CD8-positive, alpha-beta T cell (primary cell): ENCODE measurements at regions of chr2 and their contacts with region 1.

Region 1: GRCh38 chr2:27370026-27370815 is at the starts of genes EIF2B4 and SNX17:
- DNase-seq: peak; percentile 98 to 100 (median 99)
- ATAC-seq: peak; percentile 91
- H3K4me3 ChIP-seq: peak within 1 kb of the TSS; percentile 88 to 94
- H3K4me3 Mint-ChIP-seq: peak within 1 kb of the TSS; percentile 96
- H3K27ac ChIP-seq: peak within 1 kb of the TSS; percentile 76 to 88
- H3K27ac Mint-ChIP-seq: peak within 1 kb of the TSS; percentile 97
- H3K4me1 ChIP-seq: peaks cover 35% of the 10 kb centered on the region
- H3K4me1 Mint-ChIP-seq: peaks cover 36% of the 10 kb centered on the region
- H3K27me3 ChIP-seq: no peaks in the 10 kb centered on the region
- H3K27me3 Mint-ChIP-seq: no peaks in the 10 kb centered on the region
- CTCF ChIP-seq: peak; percentile 64
- total RNA-seq, gene EIF2B4: 39.7 to 39.9 TPM
- total RNA-seq, gene SNX17: 64.8 to 66.5 TPM

Region 2: GRCh38 chr2:27123302-27124231 is 246.7 kb before region 1 on chr2 and contains the start of gene ABHD1:
- CTCF ChIA-PET with region 1: no interaction called
- POLR2A ChIA-PET with region 1: no interaction called
- intact Hi-C with region 1: loop called in 1 of 2 experiments (anchors 1 kb)
- DNase-seq: peak; percentile 19 to 82 (median 68)
- ATAC-seq: peak; percentile 83
- H3K4me3 ChIP-seq: peak within 1 kb of the TSS; percentile 41 to 68
- H3K4me3 Mint-ChIP-seq: peak within 1 kb of the TSS; percentile 92
- H3K27ac ChIP-seq: peak within 1 kb of the TSS in 1 of 2 experiments; percentile 62
- H3K27ac Mint-ChIP-seq: peak within 1 kb of the TSS; percentile 81
- H3K4me1 ChIP-seq: peaks cover 14% of the 10 kb centered on the region
- H3K4me1 Mint-ChIP-seq: peaks cover 22% of the 10 kb centered on the region
- H3K27me3 ChIP-seq: peaks cover under 1 to 4% of the 10 kb centered on the region in 2 experiments
- H3K27me3 Mint-ChIP-seq: peaks cover 13% of the 10 kb centered on the region
- CTCF ChIP-seq: no peak
- total RNA-seq, gene ABHD1: 0.67 to 1.0 TPM

Region 3: DNA sequence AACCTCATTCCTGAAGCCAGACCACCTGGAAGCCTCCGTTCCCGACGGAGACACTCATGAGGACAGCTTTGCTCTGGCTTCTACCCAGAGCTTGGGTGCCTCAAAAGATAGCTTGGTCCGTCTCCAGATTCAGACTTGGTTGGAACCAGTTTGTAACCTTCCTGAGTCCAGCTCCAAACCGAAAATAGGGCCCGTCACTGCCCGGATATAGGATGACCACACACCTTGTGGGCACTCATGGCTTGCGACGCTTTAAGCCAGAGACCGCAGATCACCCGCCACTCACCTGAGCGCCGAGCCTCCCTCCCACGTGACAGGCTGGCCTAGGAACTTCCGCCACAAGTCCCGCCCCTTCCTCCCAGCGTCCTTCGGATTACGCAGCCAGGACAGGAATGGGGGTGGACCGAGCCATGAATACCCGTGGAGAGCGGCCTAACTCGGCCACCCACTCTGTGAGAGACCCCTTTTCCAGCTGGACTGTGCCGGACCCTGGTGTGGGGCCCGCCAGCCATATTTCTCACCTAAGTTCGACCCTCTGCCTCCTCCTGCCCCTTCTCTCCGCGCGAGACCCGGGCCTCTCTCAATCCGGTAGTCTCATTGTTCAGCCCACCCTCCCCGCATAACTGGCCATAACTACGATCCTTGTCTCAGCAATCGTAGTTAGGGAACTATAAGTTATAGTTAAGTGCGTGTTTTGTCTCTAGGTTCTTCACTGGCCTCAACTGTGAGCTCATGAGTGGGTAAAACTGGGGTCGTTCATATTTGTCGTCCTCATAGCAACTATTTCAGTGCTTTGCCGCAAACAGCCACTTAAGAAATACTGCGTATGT is 47.2 kb before region 1 on chr2 and contains the start of gene MPV17:
- CTCF ChIA-PET with region 1: interaction called, 3 read pairs
- POLR2A ChIA-PET with region 1: interaction called, 4 read pairs
- intact Hi-C with region 1: loop called (anchors 1 kb)
- DNase-seq: peak; percentile 65 to 93 (median 87)
- ATAC-seq: peak; percentile 96
- H3K4me3 ChIP-seq: peak within 1 kb of the TSS; percentile 80 to 81
- H3K4me3 Mint-ChIP-seq: peak within 1 kb of the TSS; percentile 99
- H3K27ac ChIP-seq: peak within 1 kb of the TSS; percentile 89 to 94
- H3K27ac Mint-ChIP-seq: peak within 1 kb of the TSS; percentile 99
- H3K4me1 ChIP-seq: peaks cover 9% of the 10 kb centered on the region
- H3K4me1 Mint-ChIP-seq: peaks cover 25% of the 10 kb centered on the region
- H3K27me3 ChIP-seq: no peaks in the 10 kb centered on the region
- H3K27me3 Mint-ChIP-seq: no peaks in the 10 kb centered on the region
- CTCF ChIP-seq: no peak
- total RNA-seq, gene MPV17: 23.6 to 26.0 TPM

Region 4: DNA sequence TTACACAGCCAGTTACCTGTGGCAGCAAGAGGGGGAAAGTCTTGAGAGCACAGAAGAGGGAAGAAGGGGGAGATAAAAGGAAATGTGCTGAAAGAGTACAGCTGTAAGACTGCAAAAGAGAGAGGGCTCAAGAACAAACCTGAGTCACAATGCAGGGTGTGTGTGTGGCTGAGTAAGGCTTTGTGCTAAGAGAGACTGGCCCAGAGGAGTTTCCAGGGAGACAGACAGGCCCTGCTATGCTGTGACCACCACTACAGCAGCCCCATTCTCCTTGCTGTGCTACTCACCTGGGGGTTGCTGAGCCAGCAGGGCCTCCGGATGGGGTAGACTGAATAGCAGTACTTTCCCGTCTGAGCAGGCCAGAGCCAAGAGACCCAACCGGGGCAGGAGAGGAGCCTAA is 34.9 kb before region 1 on chr2:
- CTCF ChIA-PET with region 1: no interaction called
- POLR2A ChIA-PET with region 1: no interaction called
- intact Hi-C with region 1: no loop called
- DNase-seq: no peak
- ATAC-seq: no peak
- H3K4me3 ChIP-seq: no peak overlapping the region
- H3K4me3 Mint-ChIP-seq: no peak overlapping the region
- H3K27ac ChIP-seq: no peak overlapping the region
- H3K27ac Mint-ChIP-seq: no peak overlapping the region
- H3K4me1 ChIP-seq: no peaks in the 10 kb centered on the region
- H3K4me1 Mint-ChIP-seq: no peaks in the 10 kb centered on the region
- H3K27me3 ChIP-seq: no peaks in the 10 kb centered on the region
- H3K27me3 Mint-ChIP-seq: no peaks in the 10 kb centered on the region
- CTCF ChIP-seq: no peak

Region 5: DNA sequence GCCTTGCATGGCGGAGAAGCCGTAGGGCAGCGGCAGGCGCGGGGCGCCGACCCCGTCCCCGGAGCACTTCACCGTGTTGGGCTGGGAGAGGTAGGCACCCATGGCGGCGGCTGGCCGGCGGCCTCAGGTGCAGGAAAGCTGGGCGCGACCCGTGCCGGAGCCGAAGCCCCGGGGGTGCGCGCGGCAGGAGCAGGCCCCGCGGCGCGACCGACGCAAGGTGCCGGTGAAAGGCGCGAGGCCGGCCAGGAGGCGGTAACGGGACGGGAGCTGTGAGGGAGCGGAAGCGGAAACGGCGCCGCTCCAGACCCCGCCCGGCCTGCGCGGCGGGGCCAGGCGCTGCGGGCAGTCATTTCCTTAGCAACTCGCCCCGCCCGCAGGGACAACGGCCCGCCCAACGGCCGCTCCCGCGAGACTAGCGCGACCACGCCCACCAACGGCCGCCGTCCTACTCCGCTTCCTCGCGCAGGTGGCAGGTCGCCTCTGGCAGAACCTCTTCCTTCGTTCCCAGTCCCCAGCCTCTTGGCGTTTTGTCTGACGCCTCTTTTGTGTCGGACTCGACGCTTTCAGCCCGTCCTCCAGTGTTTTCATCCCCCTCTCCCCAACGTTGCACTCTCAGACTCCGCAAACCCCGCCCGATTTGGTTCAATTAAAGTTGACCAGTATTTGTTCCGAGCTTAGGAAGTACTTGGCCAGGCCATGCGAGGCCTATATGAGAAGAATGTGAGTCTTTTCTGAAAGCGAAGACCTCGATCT is 39.3 kb after region 1 on chr2 and contains the start of gene PPM1G:
- CTCF ChIA-PET with region 1: no interaction called
- POLR2A ChIA-PET with region 1: interaction called, 13 read pairs
- intact Hi-C with region 1: loop called (anchors 1 kb)
- DNase-seq: peak; percentile 91 to 98 (median 97)
- ATAC-seq: peak; percentile 96
- H3K4me3 ChIP-seq: peak within 1 kb of the TSS; percentile 51 to 98
- H3K4me3 Mint-ChIP-seq: peak within 1 kb of the TSS; percentile 88
- H3K27ac ChIP-seq: peak within 1 kb of the TSS; percentile 84 to 90
- H3K27ac Mint-ChIP-seq: peak within 1 kb of the TSS; percentile 97
- H3K4me1 ChIP-seq: peaks cover 21% of the 10 kb centered on the region
- H3K4me1 Mint-ChIP-seq: peaks cover 39% of the 10 kb centered on the region
- H3K27me3 ChIP-seq: no peaks in the 10 kb centered on the region
- H3K27me3 Mint-ChIP-seq: no peaks in the 10 kb centered on the region
- CTCF ChIP-seq: no peak
- total RNA-seq, gene PPM1G: 36.4 to 38.5 TPM

Region 6: DNA sequence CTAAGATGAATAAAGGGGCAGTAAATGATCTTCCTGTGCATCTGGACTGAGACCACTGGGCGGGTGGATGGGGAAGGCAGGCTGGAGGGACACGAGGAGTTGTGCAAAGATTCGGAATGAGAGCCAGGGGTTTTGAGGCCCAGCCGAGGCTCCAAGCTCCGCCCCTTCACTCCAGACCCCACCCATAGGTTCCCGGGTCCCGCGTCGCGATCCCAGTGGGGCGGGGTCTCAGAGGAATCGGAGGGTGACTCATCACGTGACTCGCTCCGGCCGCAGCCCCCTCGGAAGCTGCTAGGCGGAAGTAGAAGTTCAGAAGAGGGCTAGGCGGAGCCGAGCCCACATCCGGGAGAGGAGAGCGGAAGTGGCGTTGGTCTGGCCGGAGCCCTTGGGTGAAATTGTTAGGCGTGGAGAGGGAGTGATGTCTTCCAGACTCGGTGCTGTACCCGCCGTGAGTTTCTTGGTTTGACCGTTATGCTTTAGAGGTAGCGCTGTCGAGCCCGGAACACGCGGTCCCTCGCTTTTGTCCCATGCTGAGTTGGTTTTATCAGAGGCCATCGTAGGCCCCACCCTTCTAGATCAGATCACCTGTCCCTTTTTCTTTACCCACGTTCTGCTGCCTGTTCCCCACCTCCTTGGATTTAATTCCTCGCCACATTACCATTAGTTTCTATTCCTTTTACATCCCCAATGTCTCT is 212.6 kb after region 1 on chr2 and contains the start of gene ZNF512:
- CTCF ChIA-PET with region 1: no interaction called
- POLR2A ChIA-PET with region 1: no interaction called
- intact Hi-C with region 1: loop called in 1 of 2 experiments (anchors 10 kb)
- DNase-seq: peak; percentile 54 to 89 (median 75)
- ATAC-seq: peak; percentile 76
- H3K4me3 ChIP-seq: peak within 1 kb of the TSS; percentile 57 to 62
- H3K4me3 Mint-ChIP-seq: peak within 1 kb of the TSS; percentile 98
- H3K27ac ChIP-seq: peak within 1 kb of the TSS; percentile 69 to 80
- H3K27ac Mint-ChIP-seq: peak within 1 kb of the TSS; percentile 98
- H3K4me1 ChIP-seq: peaks cover 41% of the 10 kb centered on the region
- H3K4me1 Mint-ChIP-seq: peaks cover 55% of the 10 kb centered on the region
- H3K27me3 ChIP-seq: peaks cover 0 to 3% of the 10 kb centered on the region in 2 experiments
- H3K27me3 Mint-ChIP-seq: no peaks in the 10 kb centered on the region
- CTCF ChIP-seq: no peak
- total RNA-seq, gene ZNF512: 12.4 TPM

Region 7: DNA sequence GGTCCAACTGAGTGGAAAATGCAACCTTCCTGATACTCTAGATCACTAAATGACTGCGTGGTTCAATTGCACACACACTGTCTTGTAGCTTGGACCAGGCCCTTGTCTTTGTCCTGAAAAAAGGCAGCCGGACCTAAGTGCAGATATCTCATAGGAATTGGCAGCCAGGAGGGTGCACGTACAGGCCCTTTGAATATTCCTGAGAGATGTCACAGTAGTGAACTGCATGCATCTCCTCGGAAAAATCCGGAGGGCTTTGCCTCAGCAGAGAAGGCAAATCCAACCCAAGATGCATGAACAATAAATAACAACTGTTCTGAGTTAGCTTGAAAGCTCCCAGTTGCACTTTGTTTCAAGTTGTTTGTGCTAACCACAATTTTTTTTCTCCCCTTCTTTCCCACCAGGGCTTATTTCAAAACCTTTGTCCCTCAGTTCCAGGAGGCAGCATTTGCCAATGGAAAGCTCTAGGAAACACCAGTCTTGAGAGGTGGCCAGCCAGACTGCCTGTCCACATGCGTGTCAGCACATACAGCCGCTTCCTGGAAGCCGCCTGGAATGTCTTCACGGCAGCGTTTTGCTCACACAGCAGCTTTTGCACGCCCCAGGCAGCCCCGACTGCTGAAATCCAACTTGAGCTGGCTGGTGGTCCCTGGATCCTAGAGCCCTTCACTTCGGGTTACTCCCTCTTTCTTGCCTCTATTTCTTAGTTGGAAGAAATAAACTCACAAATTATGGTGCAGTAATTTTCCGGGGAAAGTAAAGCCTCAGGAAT is 968.0 kb after region 1 on chr2:
- CTCF ChIA-PET with region 1: no interaction called
- POLR2A ChIA-PET with region 1: no interaction called
- intact Hi-C with region 1: no loop called
- DNase-seq: no peak
- ATAC-seq: no peak
- H3K4me3 ChIP-seq: no peak overlapping the region
- H3K4me3 Mint-ChIP-seq: no peak overlapping the region
- H3K27ac ChIP-seq: no peak overlapping the region
- H3K27ac Mint-ChIP-seq: no peak overlapping the region
- H3K4me1 ChIP-seq: no peaks in the 10 kb centered on the region
- H3K4me1 Mint-ChIP-seq: peaks cover 4% of the 10 kb centered on the region
- H3K27me3 ChIP-seq: no peaks in the 10 kb centered on the region
- H3K27me3 Mint-ChIP-seq: no peaks in the 10 kb centered on the region
- CTCF ChIP-seq: no peak